Sigmoid colon (tissue), 7 donors: ENCODE measurements at regions of chr2 and their contacts with region 1.

Region 1: GRCh38 chr2:218898109-218898878 is 17.6 kb downstream of the WNT10A start:
- DNase-seq: peak; percentile 79
- H3K4me3 ChIP-seq: no peak overlapping the region
- H3K27ac ChIP-seq: no peak overlapping the region
- H3K4me1 ChIP-seq: peaks cover 0 to 28% (median 24%) of the 10 kb centered on the region in 4 donors
- H3K27me3 ChIP-seq: peaks cover 42 to 99% (median 90%) of the 10 kb centered on the region in 3 donors
- CTCF ChIP-seq: peak; percentile 78 to 97 (median 92)
- EP300 ChIP-seq: no peak
- POLR2A ChIP-seq: no peak

Region 2: DNA sequence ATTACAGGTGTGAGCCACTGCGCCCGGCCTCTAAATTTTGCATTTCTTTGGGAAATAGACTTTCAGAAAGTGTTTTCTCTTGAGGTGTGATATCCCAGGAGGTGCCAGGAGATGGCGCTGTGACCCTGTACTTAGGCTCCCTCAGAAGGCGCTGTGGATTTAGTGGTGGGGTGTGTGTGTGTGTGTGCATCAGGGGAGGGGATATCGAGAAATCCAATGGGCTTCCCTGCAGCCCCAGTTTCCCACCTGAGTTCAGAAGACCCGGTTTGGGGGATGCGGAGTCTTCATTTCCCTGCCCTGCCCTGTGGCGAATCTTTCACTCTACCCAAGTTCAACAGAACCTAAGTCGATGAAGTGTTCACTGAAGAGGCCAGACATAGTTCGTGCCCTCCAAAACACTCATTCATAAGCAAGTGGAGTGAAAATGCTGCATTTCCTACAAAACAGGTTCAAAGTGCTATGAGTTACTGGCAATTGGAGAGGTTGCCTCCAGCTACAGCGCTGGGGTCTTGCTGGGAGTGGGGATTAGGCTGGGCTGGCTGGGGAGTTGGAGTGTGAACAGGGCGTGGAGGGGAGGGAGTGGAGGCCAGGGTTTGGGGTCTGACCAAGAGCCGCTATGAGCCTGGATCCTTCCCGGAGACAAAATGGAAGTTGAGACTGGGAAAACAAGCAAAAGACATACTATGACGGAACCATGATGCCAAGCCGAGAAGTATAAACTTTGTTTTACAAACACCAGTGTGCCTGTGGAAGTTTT is 45.2 kb before region 1 on chr2:
- intact Hi-C with region 1: loop called (anchors 1 kb)
- DNase-seq: no peak
- H3K4me3 ChIP-seq: no peak overlapping the region
- H3K27ac ChIP-seq: no peak overlapping the region
- H3K4me1 ChIP-seq: peaks cover 0 to 11% (median 3%) of the 10 kb centered on the region in 4 donors
- H3K27me3 ChIP-seq: peaks cover 8 to 98% (median 61%) of the 10 kb centered on the region in 3 donors
- CTCF ChIP-seq: peak; percentile 24 to 66 (median 61)
- EP300 ChIP-seq: no peak
- POLR2A ChIP-seq: no peak

Region 3: GRCh38 chr2:218876562-218877219 is 21.6 kb before region 1 on chr2:
- intact Hi-C with region 1: loop called (anchors 2 kb)
- DNase-seq: peak; percentile 78
- H3K4me3 ChIP-seq: no peak overlapping the region
- H3K27ac ChIP-seq: no peak overlapping the region
- H3K4me1 ChIP-seq: peaks cover 0 to 27% (median 23%) of the 10 kb centered on the region in 4 donors
- H3K27me3 ChIP-seq: peaks cover 58 to 99% (median 95%) of the 10 kb centered on the region in 3 donors
- CTCF ChIP-seq: peak; percentile 81 to 92 (median 88)
- EP300 ChIP-seq: no peak
- POLR2A ChIP-seq: no peak

Region 4: GRCh38 chr2:219446081-219446521 is 547.8 kb after region 1 on chr2:
- intact Hi-C with region 1: no loop called
- DNase-seq: peak; percentile 89
- H3K4me3 ChIP-seq: peak overlapping the region in 3 of 4 donors; percentile 68 to 88 (median 82)
- H3K27ac ChIP-seq: peak overlapping the region; percentile 96 to 99 (median 99)
- H3K4me1 ChIP-seq: peaks cover 0 to 94% (median 85%) of the 10 kb centered on the region in 4 donors
- H3K27me3 ChIP-seq: peaks cover 0 to 22% (median 4%) of the 10 kb centered on the region in 3 donors
- CTCF ChIP-seq: no peak
- EP300 ChIP-seq: no peak
- POLR2A ChIP-seq: peak; percentile 14 to 32